ENCODE measurements at regions of chr11 and their contacts with region 1.

Region 1: DNA sequence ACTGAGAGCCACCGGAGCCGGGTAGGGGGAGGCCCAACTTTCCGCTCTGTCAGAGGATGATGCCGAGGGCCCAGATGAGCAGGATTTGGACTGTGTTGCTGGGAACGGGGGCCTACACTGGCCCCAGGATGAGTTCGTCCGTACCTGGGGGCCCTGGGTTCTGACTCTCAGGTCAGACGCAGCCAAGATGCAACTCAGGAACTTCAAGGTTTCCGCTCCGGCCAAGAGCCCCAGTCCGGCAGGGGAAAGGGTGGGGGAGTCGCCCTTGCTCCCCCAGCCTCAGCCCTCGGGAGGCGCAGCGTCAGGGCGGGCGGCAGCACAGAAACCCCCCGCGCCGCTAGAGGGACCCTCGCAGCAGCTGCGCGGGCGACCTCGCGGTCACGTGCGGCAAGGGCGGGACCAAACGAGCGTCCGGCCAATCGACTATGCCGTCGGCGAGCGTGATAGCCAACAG is 241 bp upstream of the ARL2 start:
- DNase-seq: no peak
- H3K4me3 ChIP-seq: peak overlapping the region; percentile 70 to 97 (median 82)
- H3K27ac ChIP-seq: peak overlapping the region; percentile 97 to 100 (median 98)
- H3K4me1 ChIP-seq: peaks cover 16 to 37% (median 34%) of the 10 kb centered on the region in 4 donors
- H3K27me3 ChIP-seq: no peaks in the 10 kb centered on the region
- CTCF ChIP-seq: no peak
- EP300 ChIP-seq: no peak
- POLR2A ChIP-seq: peak; percentile 31

Region 2: DNA sequence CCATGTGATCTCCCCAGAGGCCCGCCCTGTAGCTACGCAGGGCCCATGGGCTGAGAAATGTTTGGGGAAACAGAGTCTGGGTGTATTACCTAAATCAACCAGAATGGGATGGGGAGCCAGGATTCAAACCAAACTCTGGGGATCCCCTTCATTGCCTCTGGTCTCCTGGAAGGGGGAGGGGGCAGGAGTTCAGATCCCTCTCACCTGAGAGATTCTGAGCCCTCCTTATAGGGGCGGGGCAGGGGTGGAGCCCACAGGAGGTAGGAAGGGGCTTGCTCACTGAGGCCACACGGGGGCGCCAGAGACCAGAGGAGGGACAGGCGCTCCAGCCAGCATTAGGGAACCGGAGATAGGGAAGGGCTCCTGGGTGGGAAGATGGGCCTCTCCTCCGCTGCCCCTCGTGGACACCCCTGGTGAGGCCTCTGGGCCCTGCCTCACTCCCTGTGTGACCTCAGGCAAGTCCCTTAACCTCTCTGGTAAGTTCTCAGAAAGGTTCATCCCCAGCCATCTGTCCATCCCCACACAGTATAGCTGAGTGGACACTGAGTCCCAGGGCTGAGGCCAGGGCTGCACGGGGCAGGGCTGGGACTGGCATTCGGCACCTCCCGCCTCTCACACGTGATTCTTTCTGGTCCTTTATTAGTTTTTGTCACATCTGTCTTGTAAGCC is 166.6 kb before region 1 on chr11:
- intact Hi-C with region 1: loop called (anchors 10 kb)
- DNase-seq: peak; percentile 96
- H3K4me3 ChIP-seq: no peak overlapping the region
- H3K27ac ChIP-seq: no peak overlapping the region
- H3K4me1 ChIP-seq: peaks cover 45 to 67% (median 58%) of the 10 kb centered on the region in 4 donors
- H3K27me3 ChIP-seq: peaks cover 0 to 8% (median 3%) of the 10 kb centered on the region in 4 donors
- CTCF ChIP-seq: peak in 2 of 3 experiments; percentile 94 to 99
- EP300 ChIP-seq: no peak
- POLR2A ChIP-seq: no peak

Region 3: DNA sequence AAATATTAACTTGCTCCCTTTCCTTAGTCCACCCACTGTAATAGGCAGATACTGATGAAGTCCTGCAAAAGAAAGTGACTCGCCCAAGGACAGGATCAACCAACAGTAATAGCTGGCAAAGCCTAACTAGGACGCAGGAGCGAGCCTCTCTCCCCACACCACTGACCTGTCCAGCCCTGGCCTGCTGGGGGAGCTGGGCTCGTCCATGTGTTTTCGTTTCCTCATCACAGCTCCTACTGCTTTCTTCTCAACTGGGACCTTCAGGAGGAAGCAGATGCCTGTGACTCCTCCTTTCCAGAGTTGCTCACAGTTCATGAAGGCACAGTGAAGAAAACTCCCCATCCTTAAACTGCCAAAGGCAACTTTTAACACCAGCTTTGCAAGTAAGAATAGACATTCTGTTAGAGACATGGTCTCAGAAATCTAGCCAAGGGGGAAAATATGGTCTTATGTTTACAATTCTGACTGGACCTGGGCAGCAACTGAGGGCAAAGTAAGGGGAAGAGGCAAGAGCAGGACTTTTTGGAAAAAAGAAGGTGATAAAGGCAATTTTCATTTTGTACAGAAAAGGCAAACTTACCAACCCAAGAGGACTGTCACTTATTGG is 66.4 kb before region 1 on chr11:
- intact Hi-C with region 1: no loop called
- DNase-seq: no peak
- H3K4me3 ChIP-seq: no peak overlapping the region
- H3K27ac ChIP-seq: no peak overlapping the region
- H3K4me1 ChIP-seq: no peaks in the 10 kb centered on the region
- H3K27me3 ChIP-seq: peaks cover 0 to 4% (median 0%) of the 10 kb centered on the region in 4 donors
- CTCF ChIP-seq: no peak
- EP300 ChIP-seq: no peak
- POLR2A ChIP-seq: no peak

Region 4: GRCh38 chr11:65083834-65084597 is 70.3 kb after region 1 on chr11 and contains the starts of genes CDCA5 and ZFPL1:
- intact Hi-C with region 1: loop called (anchors 5 kb)
- DNase-seq: peak; percentile 99
- H3K4me3 ChIP-seq: peak within 1 kb of the TSS; percentile 64 to 93 (median 83)
- H3K27ac ChIP-seq: peak within 1 kb of the TSS; percentile 90 to 97 (median 92)
- H3K4me1 ChIP-seq: peaks cover 17 to 24% (median 21%) of the 10 kb centered on the region in 4 donors
- H3K27me3 ChIP-seq: no peaks in the 10 kb centered on the region
- CTCF ChIP-seq: peak in 1 of 3 experiments; percentile 28
- EP300 ChIP-seq: no peak
- POLR2A ChIP-seq: no peak
- total RNA-seq, gene CDCA5: 0.33 to 1.1 (median 0.38) TPM
- total RNA-seq, gene ZFPL1: 24.1 to 50.7 (median 43.7) TPM

Region 5: GRCh38 chr11:65111744-65112414 is 98.2 kb after region 1 on chr11 and contains the start of gene TM7SF2:
- intact Hi-C with region 1: loop called (anchors 5 kb)
- DNase-seq: peak; percentile 99
- H3K4me3 ChIP-seq: peak within 1 kb of the TSS; percentile 52 to 65 (median 58)
- H3K27ac ChIP-seq: peak within 1 kb of the TSS; percentile 77 to 87 (median 84)
- H3K4me1 ChIP-seq: peaks cover 47 to 58% (median 51%) of the 10 kb centered on the region in 4 donors
- H3K27me3 ChIP-seq: no peaks in the 10 kb centered on the region
- CTCF ChIP-seq: peak in 1 of 3 experiments; percentile 29
- EP300 ChIP-seq: no peak
- POLR2A ChIP-seq: no peak
- total RNA-seq, gene TM7SF2: 8.8 to 17.2 (median 12.1) TPM